K562 (cell line): ENCODE measurements at regions of chr1 and their contacts with region 1.

Region 1: DNA sequence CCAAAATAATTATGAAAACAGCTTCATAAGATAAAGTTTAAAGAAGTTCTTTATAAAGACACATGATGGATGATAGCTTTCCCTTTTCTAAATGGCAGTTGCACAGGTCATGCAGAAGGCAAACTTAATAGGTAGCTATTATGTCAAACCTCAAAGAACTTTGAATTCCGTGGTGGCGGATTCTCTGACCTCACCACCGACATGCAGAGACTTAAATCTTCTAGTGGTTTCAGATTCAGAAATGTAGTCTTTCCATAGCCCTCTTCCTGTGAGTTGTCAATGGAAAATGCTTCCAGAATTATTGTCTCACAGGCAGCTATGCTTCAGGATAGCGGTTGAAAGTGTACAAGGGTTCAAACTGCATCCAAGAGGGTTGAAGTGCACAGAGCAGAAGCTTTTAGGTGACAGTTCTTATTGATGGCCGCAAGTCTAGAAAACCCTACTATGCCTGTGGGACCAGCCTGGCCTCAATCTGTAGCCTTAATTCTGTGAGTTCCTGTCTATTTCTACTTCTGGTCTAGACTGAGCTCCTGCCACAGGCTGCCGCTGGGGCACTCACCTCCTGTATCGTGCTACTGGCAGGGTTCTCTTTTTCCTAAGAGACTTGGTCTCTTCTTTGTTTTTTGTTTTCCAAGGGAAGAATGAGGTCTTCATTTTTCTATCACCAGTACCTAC is 117.0 kb upstream of the ERRFI1 start:
- DNase-seq: no peak
- ATAC-seq: peak; percentile 46; the same call in 1 of the 3 replicates
- H3K4me3 ChIP-seq: no peak overlapping the region
- H3K27ac ChIP-seq: no peak overlapping the region
- H3K4me1 ChIP-seq: no peaks in the 10 kb centered on the region
- H3K27me3 ChIP-seq: peaks cover 54 to 55% of the 10 kb centered on the region in 2 experiments
- CTCF ChIP-seq: no peak
- EP300 ChIP-seq: no peak
- POLR2A ChIP-seq: no peak
- RAD21 ChIP-seq: no peak

Region 2: GRCh38 chr1:8040586-8040985 is 102.5 kb before region 1 on chr1:
- CTCF ChIA-PET with region 1: no interaction called
- POLR2A ChIA-PET with region 1: no interaction called
- in situ Hi-C with region 1: no loop called
- intact Hi-C with region 1: loop called (anchors 10 kb)
- DNase-seq: peak in 2 of 4 experiments; percentile 32 to 33
- ATAC-seq: no peak
- H3K4me3 ChIP-seq: no peak overlapping the region
- H3K27ac ChIP-seq: no peak overlapping the region
- H3K4me1 ChIP-seq: 0 out of 5 replicates have a peak, but pooled peaks cover 0 to 3% of the 10 kb centered on the region in 2 experiments
- H3K27me3 ChIP-seq: peaks cover 14% of the 10 kb centered on the region in 2 experiments; a peak in 4 of 5 replicates
- CTCF ChIP-seq: no peak
- EP300 ChIP-seq: no peak
- POLR2A ChIP-seq: no peak
- RAD21 ChIP-seq: no peak